ENCODE measurements at regions of chr15 and their contacts with region 1.

Region 1: GRCh38 chr15:63288778-63289378 is 11.5 kb downstream of the APH1B start:
- DNase-seq: peak; percentile 52
- ATAC-seq: no peak
- H3K4me3 ChIP-seq: no peak overlapping the region
- H3K27ac ChIP-seq: no peak overlapping the region
- H3K4me1 ChIP-seq: peaks cover 16% of the 10 kb centered on the region
- H3K27me3 ChIP-seq: no peaks in the 10 kb centered on the region
- CTCF ChIP-seq: peak; percentile 66
- EP300 ChIP-seq: no peak
- POLR2A ChIP-seq: no peak
- RAD21 ChIP-seq: peak; percentile 60

Region 2: GRCh38 chr15:63188926-63189871 is 99.7 kb before region 1 on chr15 and contains the start of gene RAB8B:
- CTCF ChIA-PET with region 1: no interaction called
- POLR2A ChIA-PET with region 1: no interaction called
- in situ Hi-C with region 1: no loop called
- intact Hi-C with region 1: no loop called
- DNase-seq: peak; percentile 89
- ATAC-seq: peak; percentile 98
- H3K4me3 ChIP-seq: peak within 1 kb of the TSS; percentile 82 to 93 (median 85)
- H3K27ac ChIP-seq: no peak within 1 kb of the TSS
- H3K4me1 ChIP-seq: peaks cover 77% of the 10 kb centered on the region
- H3K27me3 ChIP-seq: no peaks in the 10 kb centered on the region; a peak in 1 of 5 replicates
- CTCF ChIP-seq: 0 out of 2 replicates have a peak, but pooled peaks have one; percentile 26
- EP300 ChIP-seq: no peak
- POLR2A ChIP-seq: peak; percentile 46 to 77; a peak in 3 of 4 replicates
- RAD21 ChIP-seq: no peak
- total RNA-seq, gene RAB8B: 14.2 and 20.4 TPM in 2 replicates

Region 3: DNA sequence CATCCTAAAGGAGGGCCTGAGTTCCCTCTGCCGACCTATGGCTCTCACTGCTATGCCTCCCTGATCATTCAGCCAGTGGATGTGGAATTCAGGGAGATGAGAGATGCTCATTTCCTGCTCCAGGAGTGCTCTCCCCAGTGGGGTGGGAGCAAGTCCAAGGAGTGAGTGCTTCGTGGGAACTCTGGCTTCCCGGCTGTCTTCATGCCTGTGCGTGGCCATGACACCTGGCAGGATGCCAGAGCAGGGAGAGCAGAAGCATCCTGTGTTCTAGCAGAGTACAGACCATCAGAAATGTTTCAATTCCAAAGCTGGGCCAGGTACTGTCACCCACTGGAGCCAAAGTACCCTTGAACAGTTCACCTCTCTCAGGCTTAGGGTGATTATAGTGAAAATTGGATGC is 33.7 kb after region 1 on chr15:
- CTCF ChIA-PET with region 1: no interaction called
- POLR2A ChIA-PET with region 1: no interaction called
- in situ Hi-C with region 1: no loop called
- intact Hi-C with region 1: no loop called
- DNase-seq: no peak
- ATAC-seq: no peak
- H3K4me3 ChIP-seq: no peak overlapping the region
- H3K27ac ChIP-seq: no peak overlapping the region
- H3K4me1 ChIP-seq: 0 out of 2 replicates have a peak, but pooled peaks cover 5% of the 10 kb centered on the region
- H3K27me3 ChIP-seq: peaks cover 1 to 4% of the 10 kb centered on the region in 2 experiments; a peak in 1 of 5 replicates
- CTCF ChIP-seq: no peak
- EP300 ChIP-seq: no peak
- POLR2A ChIP-seq: no peak
- RAD21 ChIP-seq: no peak

Region 4: GRCh38 chr15:63402498-63403253 is 113.8 kb after region 1 on chr15:
- CTCF ChIA-PET with region 1: interaction called, 9 read pairs
- POLR2A ChIA-PET with region 1: no interaction called
- in situ Hi-C with region 1: loop called (anchors 5 kb)
- intact Hi-C with region 1: loop called (anchors 2 kb)
- DNase-seq: peak; percentile 23
- ATAC-seq: peak; percentile 73
- H3K4me3 ChIP-seq: no peak overlapping the region
- H3K27ac ChIP-seq: no peak overlapping the region
- H3K4me1 ChIP-seq: peaks cover 36% of the 10 kb centered on the region
- H3K27me3 ChIP-seq: peaks cover 2 to 3% of the 10 kb centered on the region in 2 experiments; a peak in 2 of 5 replicates
- CTCF ChIP-seq: peak; percentile 55
- EP300 ChIP-seq: no peak
- POLR2A ChIP-seq: no peak
- RAD21 ChIP-seq: no peak

Region 5: DNA sequence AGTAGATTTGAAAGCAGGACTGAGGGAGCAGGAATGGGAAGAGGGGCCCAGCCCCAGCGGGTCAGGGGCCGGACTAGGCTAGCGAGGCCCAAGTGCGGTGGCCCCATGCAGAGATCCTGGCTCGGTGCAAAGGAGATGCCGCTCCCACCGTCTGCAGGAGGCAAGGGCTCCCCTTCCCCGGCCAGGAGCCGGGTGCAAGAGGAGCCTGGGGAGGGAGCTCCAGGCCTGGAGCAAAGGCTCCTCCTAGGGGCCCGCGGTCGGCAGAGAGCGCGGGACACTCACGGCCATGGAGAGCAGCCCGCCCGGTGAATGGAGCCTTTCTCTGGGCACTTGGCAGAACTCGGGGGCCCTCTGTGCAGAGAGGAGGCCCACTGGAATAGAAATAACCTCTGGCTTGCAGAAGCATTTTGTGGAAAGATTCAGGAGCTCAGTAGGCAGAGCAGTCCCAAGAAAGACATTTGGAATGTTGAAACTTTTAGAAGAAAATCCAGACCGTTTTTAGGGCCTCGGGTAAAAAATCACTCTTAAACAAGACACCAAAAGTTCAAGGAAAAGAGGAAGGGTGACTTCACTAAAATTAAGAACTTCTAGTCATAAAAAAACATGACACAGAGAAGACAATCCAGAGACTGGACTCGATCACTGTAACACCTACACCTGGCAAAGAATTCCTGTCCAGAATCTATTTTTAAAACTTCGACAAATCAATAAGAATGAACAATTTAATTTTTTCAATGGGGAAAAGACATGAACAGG is 172.5 kb after region 1 on chr15:
- CTCF ChIA-PET with region 1: no interaction called
- POLR2A ChIA-PET with region 1: no interaction called
- in situ Hi-C with region 1: no loop called
- intact Hi-C with region 1: loop called (anchors 5 kb)
- DNase-seq: peak; percentile 35
- ATAC-seq: peak; percentile 95
- H3K4me3 ChIP-seq: peak overlapping the region in 2 of 3 experiments; percentile 36 to 62; a peak in 4 of 6 replicates
- H3K27ac ChIP-seq: no peak overlapping the region
- H3K4me1 ChIP-seq: peaks cover 58% of the 10 kb centered on the region
- H3K27me3 ChIP-seq: no peaks in the 10 kb centered on the region; a peak in 1 of 5 replicates
- CTCF ChIP-seq: peak; percentile 86
- EP300 ChIP-seq: no peak
- POLR2A ChIP-seq: no peak
- RAD21 ChIP-seq: peak; percentile 80

Region 6: DNA sequence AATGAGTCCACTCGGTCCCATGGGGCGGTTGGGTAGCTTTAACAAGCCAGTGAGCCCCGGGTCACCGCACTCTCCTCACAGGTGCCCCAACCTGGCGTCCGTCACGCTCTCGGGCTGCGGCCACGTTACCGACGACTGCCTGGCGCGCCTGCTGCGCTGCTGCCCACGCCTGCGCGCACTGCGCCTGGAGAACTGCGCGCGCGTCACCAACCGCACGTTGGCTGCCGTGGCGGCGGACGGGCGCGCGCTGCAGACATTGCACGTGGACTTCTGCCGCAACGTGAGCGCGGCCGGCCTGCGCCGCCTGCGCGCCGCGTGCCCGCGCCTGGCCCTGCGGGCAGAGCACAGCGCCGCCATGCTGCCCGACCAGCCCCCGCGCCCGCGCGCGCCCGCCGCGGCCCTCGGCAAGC is 311.7 kb after region 1 on chr15:
- CTCF ChIA-PET with region 1: no interaction called
- POLR2A ChIA-PET with region 1: no interaction called
- in situ Hi-C with region 1: no loop called
- intact Hi-C with region 1: loop called (anchors 5 kb)
- DNase-seq: peak; percentile 78
- ATAC-seq: peak; percentile 75
- H3K4me3 ChIP-seq: peak overlapping the region; percentile 61 to 88 (median 79)
- H3K27ac ChIP-seq: peak overlapping the region; percentile 83
- H3K4me1 ChIP-seq: peaks cover 41% of the 10 kb centered on the region
- H3K27me3 ChIP-seq: no peaks in the 10 kb centered on the region; a peak in 1 of 5 replicates
- CTCF ChIP-seq: peak; percentile 13; the same call in 1 of the 2 replicates
- EP300 ChIP-seq: no peak
- POLR2A ChIP-seq: peak in 1 of 2 experiments; percentile 87; a peak in 2 of 4 replicates
- RAD21 ChIP-seq: peak; percentile 53; the same call in 1 of the 2 replicates

Measured in HepG2 (cell line).